Activated T-helper 2 cell treated with anti-CD3 and anti-CD28 coated beads, Interferon-gamma antibody, Interleukin-2, Interleukin-4, amounts not matched to agents 10 μg/mL and 5 μg/mL and 100 μg/mL, durations not matched to agents 14 hours and 24 hours and 36 hours (primary cell): ENCODE measurements at regions of chr1 and their contacts with region 1.

Region 1: DNA sequence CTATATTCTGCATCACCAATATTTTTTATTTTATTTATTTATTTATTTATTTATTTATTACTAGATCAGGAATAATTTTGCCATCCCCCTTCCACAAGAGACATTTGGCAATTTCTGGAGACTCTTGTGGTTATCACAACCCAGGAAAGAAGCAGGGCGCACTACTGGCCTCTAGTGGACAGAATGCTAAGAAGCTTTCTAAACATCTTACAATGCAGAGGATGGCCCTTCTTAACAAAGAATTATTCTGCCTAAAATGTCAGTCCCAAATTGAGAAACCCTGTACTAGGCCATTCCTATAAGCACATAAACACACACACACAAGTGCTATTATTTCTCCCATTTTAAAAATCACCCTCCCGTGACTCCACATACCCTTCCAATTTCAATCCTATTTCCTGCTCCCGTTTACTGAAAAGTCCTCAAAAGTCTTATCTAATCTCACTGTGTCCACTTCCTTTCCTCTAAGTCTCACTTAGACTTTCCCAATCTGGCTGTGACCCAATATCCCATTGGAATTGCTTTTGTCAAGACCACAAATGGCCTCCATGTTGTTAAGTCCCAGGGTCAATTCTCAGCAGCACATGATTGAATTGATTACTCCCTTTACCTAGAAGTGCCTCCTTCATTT is 43.7 kb upstream of the RNF11 start:
- DNase-seq: peak; percentile 20
- H3K4me3 Mint-ChIP-seq: no peak overlapping the region
- H3K27ac Mint-ChIP-seq: no peak overlapping the region
- H3K4me1 Mint-ChIP-seq: peaks cover 2% of the 10 kb centered on the region
- H3K27me3 Mint-ChIP-seq: peaks cover 5% of the 10 kb centered on the region

Region 2: GRCh38 chr1:50774759-50775351 is 417.5 kb before region 1 on chr1:
- intact Hi-C with region 1: loop called (anchors 1 kb)
- DNase-seq: no peak
- H3K4me3 Mint-ChIP-seq: no peak overlapping the region
- H3K27ac Mint-ChIP-seq: no peak overlapping the region
- H3K4me1 Mint-ChIP-seq: no peaks in the 10 kb centered on the region
- H3K27me3 Mint-ChIP-seq: no peaks in the 10 kb centered on the region

Region 3: DNA sequence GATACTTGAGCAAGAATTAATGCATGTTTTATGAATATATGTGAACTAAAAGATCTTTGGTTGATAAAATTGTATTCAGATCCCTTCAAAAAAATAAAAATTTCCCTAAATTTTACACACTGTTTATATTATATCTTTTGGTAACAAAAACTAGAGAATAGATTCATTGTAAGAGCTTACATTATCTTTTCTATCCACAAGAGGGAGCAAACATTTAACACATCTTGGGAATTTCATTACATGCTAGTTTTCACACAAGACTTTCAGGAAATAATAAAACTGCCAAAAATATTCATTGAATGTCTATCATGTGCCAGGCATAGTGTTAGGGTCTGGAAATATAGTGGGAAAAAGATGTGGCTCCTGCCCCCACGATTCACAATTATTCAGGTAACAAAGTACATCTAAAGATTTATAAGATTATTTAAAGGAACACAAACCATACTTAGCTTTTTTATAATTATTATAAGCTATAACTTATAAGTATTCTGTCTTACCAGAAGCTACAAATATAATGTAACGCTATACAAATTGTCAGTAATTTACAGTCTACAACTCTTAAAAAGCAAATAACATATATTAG is 262.9 kb before region 1 on chr1:
- intact Hi-C with region 1: loop called (anchors 1 kb)
- DNase-seq: no peak
- H3K4me3 Mint-ChIP-seq: no peak overlapping the region
- H3K27ac Mint-ChIP-seq: no peak overlapping the region
- H3K4me1 Mint-ChIP-seq: peaks cover 17% of the 10 kb centered on the region
- H3K27me3 Mint-ChIP-seq: no peaks in the 10 kb centered on the region

Region 4: GRCh38 chr1:51088488-51088887 is 103.8 kb before region 1 on chr1:
- intact Hi-C with region 1: loop called (anchors 10 kb)
- DNase-seq: no peak
- H3K4me3 Mint-ChIP-seq: no peak overlapping the region
- H3K27ac Mint-ChIP-seq: no peak overlapping the region
- H3K4me1 Mint-ChIP-seq: no peaks in the 10 kb centered on the region
- H3K27me3 Mint-ChIP-seq: peaks cover 30% of the 10 kb centered on the region

Region 5: DNA sequence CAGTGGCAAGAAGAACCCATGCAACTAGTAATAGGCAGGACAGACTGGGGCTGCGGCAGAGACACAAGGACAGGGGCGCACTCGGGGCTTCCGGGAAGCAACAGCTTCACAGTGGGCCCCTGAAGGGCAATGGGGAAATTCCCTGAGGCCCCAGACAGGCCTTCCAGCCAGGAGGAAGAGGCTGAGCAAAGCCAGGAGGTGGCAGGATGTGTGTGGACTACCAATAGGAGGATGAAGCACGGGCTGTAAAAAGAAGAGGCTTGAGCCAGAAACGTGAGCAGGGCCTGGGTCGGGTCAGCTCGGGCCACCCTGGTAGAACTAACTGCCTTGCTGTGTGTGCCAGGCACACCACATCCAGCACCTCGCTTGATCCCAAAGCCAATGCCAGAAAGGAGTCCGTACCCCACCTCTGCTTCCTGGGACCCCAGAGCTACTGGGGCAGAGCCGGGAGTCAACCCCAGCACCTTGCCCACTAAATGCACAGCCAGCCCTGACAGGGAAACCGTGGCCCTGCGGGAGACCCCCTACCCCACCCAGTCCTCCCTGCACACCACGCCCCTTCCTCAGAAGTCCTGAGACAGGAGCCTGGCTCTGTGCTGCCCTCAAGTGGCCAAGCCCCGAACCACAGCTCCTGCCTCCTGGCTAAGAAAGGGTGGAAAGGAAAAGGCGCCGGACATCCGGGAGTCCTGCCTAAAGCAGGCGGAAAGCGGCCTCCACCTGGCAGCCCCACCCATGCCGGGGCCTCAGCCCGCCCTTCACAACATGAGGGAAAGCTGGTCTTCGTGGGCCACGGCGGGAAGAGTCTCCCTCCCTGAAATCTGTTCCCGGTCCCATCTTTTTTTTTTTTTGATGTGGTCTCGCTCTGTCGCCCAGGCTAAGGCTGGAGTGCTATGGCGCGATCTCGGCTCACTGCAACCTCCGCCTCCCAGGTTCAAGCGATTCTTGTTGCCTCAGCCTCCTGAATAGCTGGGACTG is 104.3 kb after region 1 on chr1:
- intact Hi-C with region 1: loop called (anchors 2 kb)
- DNase-seq: peak; percentile 70
- H3K4me3 Mint-ChIP-seq: peak overlapping the region; percentile 41
- H3K27ac Mint-ChIP-seq: peak overlapping the region; percentile 51
- H3K4me1 Mint-ChIP-seq: peaks cover 38% of the 10 kb centered on the region
- H3K27me3 Mint-ChIP-seq: no peaks in the 10 kb centered on the region

Region 6: GRCh38 chr1:52102336-52103013 is 910.1 kb after region 1 on chr1:
- intact Hi-C with region 1: no loop called
- DNase-seq: no peak
- H3K4me3 Mint-ChIP-seq: no peak overlapping the region
- H3K27ac Mint-ChIP-seq: no peak overlapping the region
- H3K4me1 Mint-ChIP-seq: peaks cover 12% of the 10 kb centered on the region
- H3K27me3 Mint-ChIP-seq: peaks cover 7% of the 10 kb centered on the region